Aorta (tissue), 5 donors: ENCODE measurements at regions of chr3 and their contacts with region 1.

Region 1: GRCh38 chr3:101779047-101779821 is at the start of gene NXPE3:
- DNase-seq: peak; percentile 96 to 98
- ATAC-seq: peak; percentile 97
- H3K4me3 ChIP-seq: peak within 1 kb of the TSS; percentile 50 to 69
- H3K27ac ChIP-seq: peak within 1 kb of the TSS; percentile 30 to 71
- H3K4me1 ChIP-seq: peaks cover 0 to 4% of the 10 kb centered on the region in 2 donors
- H3K27me3 ChIP-seq: no peaks in the 10 kb centered on the region
- total RNA-seq, gene NXPE3: 26.2 to 27.2 TPM

Region 2: GRCh38 chr3:101724329-101725193 is 54.7 kb before region 1 on chr3 and contains the start of gene CEP97:
- intact Hi-C with region 1: loop called in 1 of 2 experiments (anchors 2 kb)
- DNase-seq: peak; percentile 95 to 96
- ATAC-seq: peak; percentile 100
- H3K4me3 ChIP-seq: peak within 1 kb of the TSS; percentile 91
- H3K27ac ChIP-seq: peak within 1 kb of the TSS in 1 of 2 donors; percentile 33
- H3K4me1 ChIP-seq: no peaks in the 10 kb centered on the region
- H3K27me3 ChIP-seq: no peaks in the 10 kb centered on the region
- total RNA-seq, gene CEP97: 9.0 to 11.9 TPM